Naive thymus-derived CD4-positive, alpha-beta T cell (primary cell): ENCODE measurements at regions of chr17 and their contacts with region 1.

Region 1: DNA sequence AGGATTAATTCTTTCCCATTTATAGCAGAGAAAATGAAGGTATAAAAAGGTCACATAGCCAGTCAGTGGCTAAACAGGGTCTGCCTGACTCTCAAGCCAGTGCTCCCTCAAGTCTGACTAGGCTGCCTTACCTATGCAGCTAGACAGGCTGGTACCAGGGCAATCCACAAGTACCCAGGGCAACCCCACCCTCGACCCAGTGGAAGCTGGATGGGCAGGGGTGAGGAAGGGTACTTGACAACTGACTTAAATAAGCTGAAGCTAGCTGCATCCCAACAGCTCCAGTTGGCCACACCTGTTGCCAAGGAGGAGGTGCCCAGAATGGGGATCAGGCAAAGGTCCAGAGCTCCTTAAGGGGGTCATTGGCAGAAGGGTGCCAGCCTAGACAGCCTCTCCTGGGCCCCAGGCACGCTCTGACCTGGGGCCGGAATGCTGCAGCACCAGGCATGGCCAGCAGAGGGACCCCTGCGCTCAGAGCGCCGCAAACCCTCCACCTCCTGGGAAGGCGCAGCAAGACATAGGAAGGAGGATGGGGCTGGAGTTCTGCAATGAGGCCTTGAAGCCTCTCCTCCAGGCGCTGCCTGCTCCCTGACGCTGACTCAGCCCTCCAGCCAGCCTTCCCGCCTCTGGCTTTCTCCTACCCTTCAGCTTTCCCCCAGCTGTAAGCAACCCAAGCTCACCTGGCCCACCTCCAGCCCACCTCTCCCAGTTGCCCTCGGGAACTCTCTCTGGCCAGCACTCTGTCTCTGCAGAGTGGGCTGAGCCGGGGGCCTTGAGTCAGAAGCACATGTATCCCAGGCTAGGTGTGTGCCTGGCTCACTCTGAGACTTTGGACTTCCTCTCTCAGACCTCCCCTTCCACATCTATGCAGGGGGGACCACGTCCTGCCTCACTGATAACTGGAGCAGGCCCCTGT is 28.8 kb downstream of the MPP2 start:
- DNase-seq: peak in 8 of 9 donors; percentile 29 to 71 (median 59)
- ATAC-seq: peak; percentile 91
- H3K4me3 ChIP-seq: no peak overlapping the region
- H3K4me3 Mint-ChIP-seq: peak overlapping the region in 1 of 10 donors; percentile 59
- H3K27ac ChIP-seq: no peak overlapping the region
- H3K27ac Mint-ChIP-seq: no peak overlapping the region
- H3K4me1 ChIP-seq: no peaks in the 10 kb centered on the region
- H3K4me1 Mint-ChIP-seq: peaks cover 0 to 2% (median 0%) of the 10 kb centered on the region in 7 donors
- H3K27me3 ChIP-seq: no peaks in the 10 kb centered on the region
- H3K27me3 Mint-ChIP-seq: peaks cover 0 to 8% (median 0%) of the 10 kb centered on the region in 5 donors

Region 2: GRCh38 chr17:43778337-43779144 is 100.0 kb before region 1 on chr17 and contains the start of gene DUSP3:
- CTCF ChIA-PET with region 1: no interaction called
- POLR2A ChIA-PET with region 1: no interaction called
- intact Hi-C with region 1: no loop called
- DNase-seq: peak; percentile 70 to 82 (median 78)
- ATAC-seq: peak; percentile 97
- H3K4me3 ChIP-seq: peak within 1 kb of the TSS; percentile 74
- H3K4me3 Mint-ChIP-seq: peak within 1 kb of the TSS; percentile 80 to 89 (median 84)
- H3K27ac ChIP-seq: peak within 1 kb of the TSS; percentile 79
- H3K27ac Mint-ChIP-seq: peak within 1 kb of the TSS in 7 of 9 donors; percentile 71 to 86 (median 78)
- H3K4me1 ChIP-seq: peaks cover 7% of the 10 kb centered on the region in 2 donors
- H3K4me1 Mint-ChIP-seq: peaks cover 0 to 15% (median 10%) of the 10 kb centered on the region in 7 donors
- H3K27me3 ChIP-seq: no peaks in the 10 kb centered on the region
- H3K27me3 Mint-ChIP-seq: peaks cover 16 to 38% (median 24%) of the 10 kb centered on the region in 5 donors
- total RNA-seq, gene DUSP3: 8.5 to 31.0 (median 11.0) TPM

Region 3: GRCh38 chr17:43917348-43918018 is 39.0 kb after region 1 on chr17:
- CTCF ChIA-PET with region 1: no interaction called
- POLR2A ChIA-PET with region 1: no interaction called
- intact Hi-C with region 1: loop called in 1 of 2 experiments (anchors 1 kb)
- DNase-seq: peak; percentile 34 to 56 (median 46)
- ATAC-seq: peak; percentile 85
- H3K4me3 ChIP-seq: peak overlapping the region; percentile 65
- H3K4me3 Mint-ChIP-seq: peak overlapping the region; percentile 72 to 89 (median 83)
- H3K27ac ChIP-seq: peak overlapping the region; percentile 65
- H3K27ac Mint-ChIP-seq: peak overlapping the region; percentile 6 to 84 (median 68)
- H3K4me1 ChIP-seq: peaks cover 0 to 9% of the 10 kb centered on the region in 2 donors
- H3K4me1 Mint-ChIP-seq: peaks cover 10 to 28% (median 17%) of the 10 kb centered on the region in 7 donors
- H3K27me3 ChIP-seq: no peaks in the 10 kb centered on the region
- H3K27me3 Mint-ChIP-seq: peaks cover 0 to 11% (median 0%) of the 10 kb centered on the region in 5 donors

Region 4: GRCh38 chr17:43994272-43995149 is 116.0 kb after region 1 on chr17:
- CTCF ChIA-PET with region 1: interaction called, 16 read pairs
- POLR2A ChIA-PET with region 1: no interaction called
- intact Hi-C with region 1: loop called (anchors 1 kb)
- DNase-seq: peak; percentile 40 to 74 (median 63)
- ATAC-seq: peak; percentile 94
- H3K4me3 ChIP-seq: peak overlapping the region; percentile 7
- H3K4me3 Mint-ChIP-seq: peak overlapping the region in 5 of 10 donors; percentile 11 to 59 (median 31)
- H3K27ac ChIP-seq: no peak overlapping the region
- H3K27ac Mint-ChIP-seq: no peak overlapping the region
- H3K4me1 ChIP-seq: peaks cover 6 to 9% of the 10 kb centered on the region in 2 donors
- H3K4me1 Mint-ChIP-seq: no peaks in the 10 kb centered on the region
- H3K27me3 ChIP-seq: peaks cover 3 to 4% of the 10 kb centered on the region in 2 donors
- H3K27me3 Mint-ChIP-seq: peaks cover 0 to 35% (median 13%) of the 10 kb centered on the region in 5 donors

Region 5: GRCh38 chr17:44044067-44044466 is 165.5 kb after region 1 on chr17:
- CTCF ChIA-PET with region 1: interaction called, 21 read pairs
- POLR2A ChIA-PET with region 1: no interaction called
- intact Hi-C with region 1: loop called (anchors 1 kb)
- DNase-seq: no peak
- ATAC-seq: no peak
- H3K4me3 ChIP-seq: no peak overlapping the region
- H3K4me3 Mint-ChIP-seq: no peak overlapping the region
- H3K27ac ChIP-seq: no peak overlapping the region
- H3K27ac Mint-ChIP-seq: peak overlapping the region in 5 of 9 donors; percentile 2 to 52 (median 7)
- H3K4me1 ChIP-seq: peaks cover 0 to 5% of the 10 kb centered on the region in 2 donors
- H3K4me1 Mint-ChIP-seq: peaks cover 14 to 27% (median 19%) of the 10 kb centered on the region in 7 donors
- H3K27me3 ChIP-seq: no peaks in the 10 kb centered on the region
- H3K27me3 Mint-ChIP-seq: no peaks in the 10 kb centered on the region

Region 6: DNA sequence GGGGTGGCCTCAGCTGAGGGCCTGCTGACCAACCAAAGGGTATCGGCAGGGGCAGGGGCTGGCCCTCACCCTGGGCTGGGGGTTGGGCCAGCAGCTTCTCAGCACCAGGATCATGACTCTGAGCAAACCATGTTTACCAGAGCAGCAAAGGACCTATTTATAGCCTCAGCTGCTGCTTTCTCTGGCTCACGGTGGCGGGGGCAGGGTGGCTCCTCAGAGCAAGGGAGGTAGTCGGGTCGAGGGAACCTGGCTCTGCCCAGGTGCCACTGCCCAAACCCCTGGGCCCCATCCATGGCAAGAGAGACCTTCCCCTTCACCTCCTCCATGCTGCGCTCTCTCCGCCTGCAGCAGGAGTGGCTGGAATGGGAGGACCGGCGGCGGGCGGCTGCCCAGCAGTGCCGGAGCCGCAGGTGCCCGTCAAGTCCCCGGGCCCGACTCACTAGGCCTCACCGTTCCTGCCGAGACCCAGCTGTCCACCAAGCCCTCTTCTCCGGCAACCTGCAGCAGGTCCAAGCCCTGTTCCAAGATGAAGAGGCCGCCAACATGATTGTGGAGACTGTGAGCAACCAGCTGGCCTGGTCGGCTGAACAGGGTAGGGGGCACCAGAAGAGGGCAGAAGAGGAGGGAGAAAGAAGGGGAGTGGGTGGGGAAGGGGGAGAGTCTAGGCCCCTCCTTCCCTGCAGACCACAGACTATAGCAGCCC is 292.1 kb after region 1 on chr17 and contains the start of gene ASB16:
- CTCF ChIA-PET with region 1: interaction called, 4 read pairs
- POLR2A ChIA-PET with region 1: no interaction called
- intact Hi-C with region 1: loop called in 1 of 2 experiments (anchors 1 kb)
- DNase-seq: no peak
- ATAC-seq: no peak
- H3K4me3 ChIP-seq: no peak within 1 kb of the TSS
- H3K4me3 Mint-ChIP-seq: no peak within 1 kb of the TSS
- H3K27ac ChIP-seq: no peak within 1 kb of the TSS
- H3K27ac Mint-ChIP-seq: peak within 1 kb of the TSS in 2 of 9 donors; percentile 46 to 76
- H3K4me1 ChIP-seq: peaks cover 0 to 4% of the 10 kb centered on the region in 2 donors
- H3K4me1 Mint-ChIP-seq: peaks cover 7 to 21% (median 14%) of the 10 kb centered on the region in 7 donors
- H3K27me3 ChIP-seq: no peaks in the 10 kb centered on the region
- H3K27me3 Mint-ChIP-seq: no peaks in the 10 kb centered on the region
- total RNA-seq, gene ASB16: 0.34 TPM in 1 of 5 experiments, not detected in the others